Sciatic nerve (tissue), 2 donors: ENCODE measurements at regions of chr7 and their contacts with region 1.

Region 1: GRCh38 chr7:106456339-106456738 is 171.6 kb upstream of the NAMPT start:
- DNase-seq: no peak
- ATAC-seq: no peak

Region 2: GRCh38 chr7:104761892-104762291 is 1694.4 kb before region 1 on chr7:
- intact Hi-C with region 1: loop called (anchors 5 kb)
- DNase-seq: no peak
- ATAC-seq: no peak

Region 3: GRCh38 chr7:106425017-106425719 is 31.2 kb before region 1 on chr7:
- intact Hi-C with region 1: no loop called
- DNase-seq: peak; percentile 78
- ATAC-seq: peak; percentile 89